Endothelial cell of umbilical vein (primary cell): ENCODE measurements at regions of chr1 and their contacts with region 1.

Region 1: DNA sequence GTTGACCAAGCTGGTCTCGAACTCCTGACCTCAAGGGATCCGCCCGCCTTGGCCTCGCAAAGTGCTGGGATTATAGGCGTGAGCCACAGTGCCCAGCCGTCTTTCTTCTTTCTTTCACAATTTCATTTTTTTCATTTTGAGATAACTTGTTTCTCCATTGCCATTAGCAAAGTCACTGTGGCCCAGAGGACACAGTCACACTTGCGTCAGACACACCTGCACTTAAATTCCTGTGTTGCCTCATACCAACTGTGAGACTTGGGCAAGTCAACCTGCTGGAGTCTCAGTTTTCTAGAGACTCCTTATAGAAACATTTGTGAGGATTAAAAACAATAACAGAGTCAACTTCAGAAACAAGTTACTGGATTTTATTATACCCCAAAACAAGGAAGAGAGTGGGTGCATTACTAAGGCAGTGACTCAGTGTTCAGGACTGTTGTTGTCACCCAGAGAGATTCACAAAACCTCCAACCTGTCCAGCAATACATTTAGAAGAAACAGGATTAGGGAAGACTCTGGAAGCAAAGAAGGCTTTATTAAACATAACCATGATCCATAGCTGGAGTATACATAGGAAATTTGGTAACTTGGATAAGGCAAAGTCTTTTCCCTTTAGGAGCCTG is 2.6 kb downstream of the TEDDM1 start:
- DNase-seq: no peak
- H3K4me3 ChIP-seq: no peak overlapping the region
- H3K27ac ChIP-seq: no peak overlapping the region
- H3K4me1 ChIP-seq: no peaks in the 10 kb centered on the region
- H3K27me3 ChIP-seq: no peaks in the 10 kb centered on the region
- CTCF ChIP-seq: no peak
- POLR2A ChIP-seq: no peak

Region 2: GRCh38 chr1:181479137-181479745 is 918.6 kb before region 1 on chr1:
- CTCF ChIA-PET with region 1: interaction called, 9 read pairs
- POLR2A ChIA-PET with region 1: no interaction called
- dilution Hi-C with region 1: no loop called
- intact Hi-C with region 1: loop called (anchors 1 kb)
- DNase-seq: peak; percentile 49
- H3K4me3 ChIP-seq: no peak overlapping the region
- H3K27ac ChIP-seq: no peak overlapping the region
- H3K4me1 ChIP-seq: no peaks in the 10 kb centered on the region
- H3K27me3 ChIP-seq: peaks cover 21 to 30% of the 10 kb centered on the region in 2 experiments
- CTCF ChIP-seq: peak; percentile 60 to 61
- POLR2A ChIP-seq: no peak